Cardiac septum (tissue), 1 donor: ENCODE measurements at regions of chr19 and their contacts with region 1.

Region 1: DNA sequence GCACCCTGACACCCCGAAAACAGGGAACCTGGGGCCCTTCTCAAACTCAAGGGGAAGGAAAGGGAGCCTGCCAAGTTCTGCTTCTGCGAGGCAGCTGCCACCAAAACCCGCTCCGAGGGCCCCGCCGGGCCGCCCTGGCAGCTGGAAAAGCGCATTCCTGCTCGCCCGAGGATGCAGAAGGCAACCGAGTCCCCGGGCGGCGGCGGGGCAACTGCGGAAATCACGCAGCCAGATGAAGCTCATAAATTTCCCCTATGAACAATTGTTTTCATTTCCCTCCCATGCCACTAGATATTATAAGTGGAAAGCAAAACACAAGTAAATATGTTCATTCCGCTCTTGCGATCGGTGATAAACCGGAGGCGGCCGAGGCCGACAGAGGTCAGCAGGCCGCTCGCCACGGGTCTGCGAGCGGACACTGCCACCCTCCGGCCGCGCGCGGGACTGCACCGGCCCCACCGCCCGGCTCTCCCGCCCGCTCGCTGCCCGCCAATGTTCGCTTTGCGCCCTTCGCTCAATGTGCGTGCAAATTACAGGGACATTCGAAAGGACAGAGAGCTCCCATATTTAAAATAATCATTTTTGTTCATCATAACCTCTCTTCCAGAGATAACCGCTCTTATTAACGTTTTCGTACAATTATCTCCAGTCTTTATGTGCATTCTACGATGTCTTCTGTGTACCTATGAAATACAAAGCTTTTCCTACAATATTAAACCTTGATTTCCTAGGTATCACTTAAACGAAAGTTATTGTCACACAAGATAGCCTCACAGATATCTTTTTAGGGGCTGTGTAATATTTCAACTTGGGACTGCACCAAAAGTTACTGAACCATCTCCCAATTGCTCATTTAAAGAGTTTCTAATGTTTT is 120.8 kb upstream of the ZNF507 start:
- DNase-seq: no peak

Region 2: DNA sequence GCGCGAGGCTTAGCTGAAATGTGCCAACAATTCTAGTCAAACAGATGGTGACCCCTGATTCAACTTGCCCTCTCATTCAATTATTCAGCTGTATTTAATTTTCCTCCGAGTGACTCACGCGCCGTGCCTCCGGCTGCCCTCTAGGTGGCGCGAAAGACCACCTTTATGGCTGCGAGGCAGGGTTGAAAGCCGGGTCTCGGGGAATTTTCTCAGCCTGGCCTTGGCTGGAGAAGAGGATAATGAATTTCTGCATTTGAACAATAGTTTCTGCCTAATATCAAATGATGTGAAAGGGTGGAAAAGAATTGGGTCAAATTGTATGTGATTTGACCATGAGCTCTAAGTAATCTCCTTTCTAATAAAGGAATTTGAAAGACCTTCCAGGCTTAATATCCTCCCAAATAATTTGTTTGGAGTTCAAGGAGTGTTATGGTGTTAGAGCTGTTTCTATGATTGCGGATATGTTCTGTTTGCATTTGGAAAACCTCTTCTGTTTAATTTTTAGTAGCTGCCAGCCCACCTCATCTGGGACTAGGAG is 1541.5 kb before region 1 on chr19:
- intact Hi-C with region 1: loop called (anchors 5 kb)
- DNase-seq: peak; percentile 81

Region 3: DNA sequence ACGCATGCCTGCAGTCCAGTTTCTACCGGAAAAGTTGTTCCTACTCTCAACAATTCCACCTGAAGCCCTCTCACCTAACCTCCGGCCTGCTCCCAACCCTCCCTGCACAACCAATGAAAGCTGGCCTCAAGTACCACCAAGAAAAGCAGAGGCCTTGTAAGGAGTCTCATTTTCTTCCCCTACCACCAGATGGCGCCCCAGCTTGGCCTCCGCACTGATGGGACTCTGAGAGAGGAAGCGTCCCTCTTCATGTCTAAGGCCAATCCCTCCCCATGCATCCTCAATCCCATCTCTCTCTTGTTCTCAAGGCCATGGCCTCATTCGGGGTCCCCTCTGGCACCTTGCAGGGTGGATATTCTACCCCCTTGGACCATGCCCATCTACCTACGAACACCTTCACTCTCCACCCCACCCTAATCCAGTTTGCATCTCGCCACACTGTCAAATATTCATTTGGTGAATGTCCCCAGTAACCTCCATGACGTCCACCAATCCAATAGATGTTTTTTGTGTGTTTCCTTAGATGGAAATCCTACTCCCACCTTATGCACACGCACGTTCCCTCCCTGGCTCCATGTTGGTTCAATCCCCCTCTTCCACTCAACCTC is 1439.7 kb before region 1 on chr19:
- intact Hi-C with region 1: loop called (anchors 10 kb)
- DNase-seq: peak; percentile 83

Region 4: GRCh38 chr19:31054430-31054829 is 1170.2 kb before region 1 on chr19:
- intact Hi-C with region 1: loop called (anchors 10 kb)
- DNase-seq: no peak